Activated T-helper 1 cell treated with anti-CD3 and anti-CD28 coated beads, Interleukin-12 subunit alpha, Interleukin-12 subunit beta, Interleukin-2, Interleukin-4 antibody, amounts not matched to agents 30 ng/mL and 10 ng/mL and 1 ng/mL, durations not matched to agents 14 hours and 24 hours and 36 hours (primary cell): ENCODE measurements at regions of chr19 and their contacts with region 1.

Region 1: DNA sequence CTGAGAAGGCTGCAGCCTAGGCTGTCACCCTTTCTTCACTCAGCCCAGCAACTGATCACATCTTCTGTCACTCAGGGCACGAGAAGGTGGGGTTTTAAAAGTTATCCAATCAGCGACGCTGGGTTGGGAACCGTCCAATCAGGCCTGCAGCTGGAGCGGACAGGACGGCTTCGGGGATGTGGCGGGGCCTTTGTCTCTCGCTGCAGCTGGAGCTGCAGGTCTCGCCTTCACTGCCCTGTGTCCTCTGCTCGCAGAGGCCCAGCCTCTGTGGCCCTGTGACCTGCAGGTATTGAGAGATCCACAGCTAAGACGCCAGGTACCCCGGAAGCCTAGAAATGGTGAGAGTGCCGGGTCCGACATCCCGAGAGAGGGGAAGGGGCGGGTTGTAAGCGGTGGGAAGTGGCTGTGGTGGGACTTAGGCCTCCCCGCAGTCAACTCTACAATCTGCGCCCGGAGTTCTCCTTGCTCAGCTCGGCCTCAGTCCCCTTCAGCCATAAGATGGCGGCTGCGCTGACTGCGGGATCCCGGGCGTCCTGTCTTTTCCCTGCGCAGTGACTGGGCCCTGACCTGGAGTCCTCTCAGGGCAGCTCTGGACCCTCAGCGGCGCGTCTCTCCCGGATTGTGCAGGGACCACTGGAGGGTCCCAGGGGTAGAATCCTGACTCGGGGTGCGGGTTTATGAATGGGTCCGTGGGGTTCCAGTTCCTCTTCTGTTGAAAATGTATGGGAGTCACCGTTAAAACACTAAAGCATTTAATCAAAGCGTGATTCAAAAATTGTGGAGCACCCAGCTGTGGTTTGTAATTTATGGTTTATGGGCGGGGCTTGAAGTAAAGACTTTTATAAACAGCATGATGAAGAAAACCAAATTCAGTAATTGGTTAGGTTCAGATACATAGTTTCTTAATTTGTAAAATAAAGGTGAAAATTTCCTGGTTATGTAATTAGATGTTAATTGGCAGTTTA is at the start of gene ZNF714:
- DNase-seq: peak; percentile 86
- H3K4me3 Mint-ChIP-seq: peak within 1 kb of the TSS; percentile 99
- H3K27ac Mint-ChIP-seq: peak within 1 kb of the TSS; percentile 98
- H3K4me1 Mint-ChIP-seq: peaks cover 31% of the 10 kb centered on the region
- H3K27me3 Mint-ChIP-seq: no peaks in the 10 kb centered on the region
- total RNA-seq, gene ZNF714: 18.5 and 19.5 TPM in 2 replicates

Region 2: GRCh38 chr19:19776041-19777008 is 1306.0 kb before region 1 on chr19:
- intact Hi-C with region 1: loop called (anchors 5 kb)
- DNase-seq: peak; percentile 90
- H3K4me3 Mint-ChIP-seq: peak overlapping the region; percentile 96
- H3K27ac Mint-ChIP-seq: peak overlapping the region; percentile 89
- H3K4me1 Mint-ChIP-seq: peaks cover 42% of the 10 kb centered on the region
- H3K27me3 Mint-ChIP-seq: no peaks in the 10 kb centered on the region

Region 3: DNA sequence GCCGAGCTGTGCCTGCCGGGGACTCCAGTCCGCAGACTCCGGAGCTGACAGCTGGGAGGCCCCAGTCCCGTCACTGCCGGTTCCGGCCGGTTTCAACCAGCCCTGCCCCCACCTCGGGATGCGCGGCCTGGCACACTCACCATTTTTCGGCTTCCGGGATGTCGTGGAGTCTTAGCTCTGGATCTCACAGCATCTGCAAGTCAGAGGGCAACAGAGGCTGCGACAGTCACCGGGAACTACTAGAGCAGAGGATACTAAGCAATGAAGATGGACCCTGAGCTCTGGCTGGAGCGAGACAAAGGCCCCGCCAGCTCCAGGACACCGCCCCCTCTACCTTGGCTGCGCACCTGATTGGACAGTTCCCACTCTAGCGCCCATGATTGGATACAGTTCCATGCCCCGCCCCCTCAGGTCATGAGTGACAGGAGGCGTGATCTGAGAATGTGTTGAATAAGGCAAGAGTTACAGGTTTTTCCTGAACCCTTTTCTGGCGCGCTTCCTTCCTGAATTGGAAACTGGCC is 1043.0 kb before region 1 on chr19 and contains the start of gene ZNF682:
- intact Hi-C with region 1: loop called (anchors 1 kb)
- DNase-seq: peak; percentile 82
- H3K4me3 Mint-ChIP-seq: peak within 1 kb of the TSS; percentile 91
- H3K27ac Mint-ChIP-seq: peak within 1 kb of the TSS; percentile 88
- H3K4me1 Mint-ChIP-seq: peaks cover 17% of the 10 kb centered on the region
- H3K27me3 Mint-ChIP-seq: no peaks in the 10 kb centered on the region
- total RNA-seq, gene ZNF682: 6.1 and 6.2 TPM in 2 replicates

Region 4: GRCh38 chr19:20923077-20923871 is 159.0 kb before region 1 on chr19 and contains the start of gene ZNF85:
- intact Hi-C with region 1: loop called (anchors 1 kb)
- DNase-seq: peak; percentile 85
- H3K4me3 Mint-ChIP-seq: peak within 1 kb of the TSS; percentile 94
- H3K27ac Mint-ChIP-seq: peak within 1 kb of the TSS; percentile 92
- H3K4me1 Mint-ChIP-seq: no peaks in the 10 kb centered on the region
- H3K27me3 Mint-ChIP-seq: no peaks in the 10 kb centered on the region
- total RNA-seq, gene ZNF85: 10.0 and 11.1 TPM in 2 replicates

Region 5: DNA sequence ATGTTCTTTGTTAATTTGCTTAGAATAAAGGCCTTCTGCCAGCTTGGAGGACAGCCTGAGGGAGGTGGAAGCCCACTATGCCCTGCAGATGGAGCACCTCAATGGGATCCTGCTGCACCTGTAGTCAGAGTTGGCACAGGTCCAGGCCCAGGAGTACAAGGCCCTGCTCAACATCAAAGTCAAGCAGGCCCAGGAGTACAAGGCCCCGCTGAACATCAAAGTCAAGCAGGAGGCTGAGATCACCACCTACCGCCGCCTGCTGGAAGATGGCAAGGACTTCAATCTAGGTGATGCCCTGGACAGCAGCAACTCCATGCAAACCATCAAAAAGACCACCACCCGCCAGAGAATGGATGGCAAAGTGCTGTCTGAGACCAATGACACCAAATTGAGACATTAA is 117.5 kb before region 1 on chr19:
- intact Hi-C with region 1: no loop called
- DNase-seq: no peak
- H3K4me3 Mint-ChIP-seq: no peak overlapping the region
- H3K27ac Mint-ChIP-seq: no peak overlapping the region
- H3K4me1 Mint-ChIP-seq: no peaks in the 10 kb centered on the region
- H3K27me3 Mint-ChIP-seq: no peaks in the 10 kb centered on the region

Region 6: DNA sequence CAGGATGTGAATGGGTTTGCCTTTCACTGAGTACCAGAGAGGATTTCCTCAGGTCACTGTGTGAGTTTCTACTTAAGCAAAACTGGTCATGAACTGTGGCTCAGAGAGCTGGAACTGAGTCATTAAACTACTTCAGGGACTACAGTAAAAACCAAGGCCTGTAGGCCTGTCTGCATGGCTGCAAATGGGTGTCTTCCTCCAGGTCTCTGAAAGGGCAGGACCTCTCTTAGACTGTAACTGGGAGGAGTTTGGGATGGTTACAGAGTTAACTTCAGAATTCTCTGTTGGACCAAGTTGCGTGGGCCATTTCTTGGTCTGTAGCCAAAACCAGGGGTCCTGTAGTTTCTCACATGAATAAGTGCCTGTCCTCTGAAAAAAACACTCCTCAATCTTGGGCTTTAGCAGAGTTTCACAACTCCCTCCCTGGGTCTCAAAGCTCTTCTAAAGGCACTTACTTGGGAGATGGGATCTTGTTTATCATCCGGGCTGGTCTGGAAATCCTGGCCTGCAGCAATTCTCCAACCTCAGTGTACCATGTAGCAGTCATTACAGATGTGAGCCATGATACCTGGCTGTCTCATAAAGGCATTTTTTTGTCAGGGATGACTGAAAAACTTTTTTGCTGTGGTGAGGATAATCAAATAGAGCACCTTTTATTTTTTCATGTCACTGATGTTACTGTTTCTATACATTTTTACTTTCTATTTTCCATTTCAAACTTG is 19.4 kb after region 1 on chr19:
- intact Hi-C with region 1: no loop called
- DNase-seq: no peak
- H3K4me3 Mint-ChIP-seq: no peak overlapping the region
- H3K27ac Mint-ChIP-seq: peak overlapping the region; percentile 55
- H3K4me1 Mint-ChIP-seq: peaks cover 11% of the 10 kb centered on the region
- H3K27me3 Mint-ChIP-seq: no peaks in the 10 kb centered on the region

Region 7: GRCh38 chr19:21141787-21142464 is 59.6 kb after region 1 on chr19 and contains the start of gene ZNF431:
- intact Hi-C with region 1: loop called (anchors 1 kb)
- DNase-seq: peak; percentile 85
- H3K4me3 Mint-ChIP-seq: peak within 1 kb of the TSS; percentile 96
- H3K27ac Mint-ChIP-seq: peak within 1 kb of the TSS; percentile 91
- H3K4me1 Mint-ChIP-seq: peaks cover 25% of the 10 kb centered on the region
- H3K27me3 Mint-ChIP-seq: no peaks in the 10 kb centered on the region
- total RNA-seq, gene ZNF431: 16.0 and 16.8 TPM in 2 replicates

Region 8: DNA sequence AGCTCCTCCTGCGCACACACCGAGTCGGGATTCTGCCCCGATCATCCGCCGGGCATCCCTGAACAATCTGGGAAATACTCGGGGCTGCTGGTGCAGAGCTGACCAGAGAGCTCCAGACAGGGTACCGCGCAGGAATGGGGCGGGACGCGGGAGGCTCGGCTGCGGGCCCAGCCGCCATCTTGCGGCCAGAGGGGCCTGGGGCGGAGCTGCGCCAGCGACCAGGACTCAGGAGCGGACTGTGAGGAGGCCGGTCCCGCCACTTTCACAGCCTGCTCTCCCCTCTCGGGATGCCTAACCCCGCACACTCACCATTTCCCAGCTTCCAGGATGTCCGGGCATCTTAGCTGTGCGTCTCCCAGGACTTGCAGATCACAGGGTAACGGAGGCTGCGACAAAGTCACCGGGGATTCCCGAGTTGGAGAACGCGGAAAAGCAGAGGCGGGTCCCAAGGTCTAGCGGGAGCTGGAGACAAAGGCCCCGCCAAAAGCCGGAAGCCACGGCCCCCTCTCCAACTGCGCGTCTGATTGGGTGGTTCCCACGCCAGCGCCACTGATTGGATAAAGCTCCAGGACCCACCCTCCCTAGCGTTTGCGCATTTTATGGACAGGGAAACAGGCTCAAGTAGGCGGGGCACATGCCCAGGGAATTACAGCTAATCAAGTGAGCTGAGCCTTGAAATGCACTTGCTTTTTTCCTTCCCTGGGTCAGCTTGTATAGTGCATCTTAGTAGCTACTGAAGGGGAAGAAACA is 769.5 kb after region 1 on chr19:
- intact Hi-C with region 1: loop called (anchors 5 kb)
- DNase-seq: peak; percentile 80
- H3K4me3 Mint-ChIP-seq: peak overlapping the region; percentile 90
- H3K27ac Mint-ChIP-seq: peak overlapping the region; percentile 87
- H3K4me1 Mint-ChIP-seq: peaks cover 21% of the 10 kb centered on the region
- H3K27me3 Mint-ChIP-seq: no peaks in the 10 kb centered on the region